ENCODE measurements at regions of chr2 and their contacts with region 1.

Region 1: DNA sequence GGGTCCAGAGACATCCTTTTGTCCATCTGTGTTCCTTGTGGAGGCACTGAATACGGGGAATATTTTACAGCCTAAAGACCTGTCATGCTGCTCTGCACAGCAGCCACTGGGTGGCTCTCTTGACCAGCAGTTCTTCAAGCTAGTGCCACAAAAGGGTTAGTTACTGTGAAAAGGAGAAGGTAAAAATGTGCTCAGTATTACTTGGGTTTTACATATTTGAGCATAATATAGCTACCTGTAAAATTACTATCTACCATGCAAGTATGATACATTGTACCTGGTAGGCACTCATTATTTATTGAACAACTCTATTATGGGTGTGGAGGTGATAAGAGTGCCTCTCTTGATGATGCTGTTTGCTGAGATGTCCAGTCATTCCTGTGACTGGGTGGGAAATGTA is 23.6 kb downstream of the FZD5 start:
- DNase-seq: peak; percentile 65
- H3K4me3 ChIP-seq: no peak overlapping the region
- H3K27ac ChIP-seq: no peak overlapping the region
- H3K4me1 ChIP-seq: no peaks in the 10 kb centered on the region
- H3K27me3 ChIP-seq: no peaks in the 10 kb centered on the region
- CTCF ChIP-seq: peak; percentile 83 to 87
- POLR2A ChIP-seq: no peak

Region 2: DNA sequence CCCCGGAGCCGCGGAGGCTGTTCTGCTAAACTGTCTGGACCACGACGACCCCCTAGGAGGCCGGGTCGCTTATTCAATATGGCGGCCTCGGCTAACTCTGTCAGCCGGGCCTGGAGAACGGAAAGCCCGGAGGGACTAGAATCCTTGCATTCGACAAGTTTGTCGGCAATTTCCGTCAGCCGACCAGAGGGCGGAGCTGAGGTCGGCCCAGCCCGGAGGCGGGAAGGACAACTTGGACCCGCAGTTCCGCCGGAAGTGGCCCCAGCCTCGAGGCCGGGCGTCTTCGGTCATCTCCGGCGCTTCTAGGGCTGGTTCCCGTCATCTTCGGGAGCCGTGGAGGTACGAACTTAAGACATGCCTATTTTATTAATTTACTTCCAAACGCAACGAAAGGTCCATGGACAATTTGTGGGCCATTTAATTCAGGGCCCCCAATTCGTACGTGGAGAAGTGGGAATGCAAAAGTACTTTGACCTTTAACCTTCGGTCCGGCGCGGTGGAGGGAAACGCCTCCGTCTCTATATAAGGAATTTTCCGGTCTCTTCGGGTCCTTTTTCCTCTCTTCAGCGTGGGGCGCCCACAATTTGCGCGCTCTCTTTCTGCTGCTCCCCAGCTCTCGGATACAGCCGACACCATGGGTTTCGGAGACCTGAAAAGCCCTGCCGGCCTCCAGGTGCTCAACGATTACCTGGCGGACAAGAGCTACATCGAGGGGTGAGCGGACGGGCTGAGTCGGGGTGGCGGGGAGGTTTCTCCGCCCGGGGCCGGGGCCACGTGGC is 1586.6 kb before region 1 on chr2 and contains the starts of genes EEF1B2 and NDUFS1:
- CTCF ChIA-PET with region 1: no interaction called
- POLR2A ChIA-PET with region 1: no interaction called
- dilution Hi-C with region 1: no loop called
- intact Hi-C with region 1: no loop called
- DNase-seq: peak; percentile 99
- H3K4me3 ChIP-seq: peak within 1 kb of the TSS; percentile 72 to 97 (median 96)
- H3K27ac ChIP-seq: peak within 1 kb of the TSS; percentile 67
- H3K4me1 ChIP-seq: peaks cover 27% of the 10 kb centered on the region
- H3K27me3 ChIP-seq: no peaks in the 10 kb centered on the region
- CTCF ChIP-seq: no peak
- POLR2A ChIP-seq: peak; percentile 89
- total RNA-seq, gene EEF1B2: 558 and 576 TPM in 2 replicates
- total RNA-seq, gene NDUFS1: 93.2 and 95.5 TPM in 2 replicates

Region 3: GRCh38 chr2:207762146-207762545 is 16.0 kb after region 1 on chr2:
- CTCF ChIA-PET with region 1: interaction called, 10 read pairs
- POLR2A ChIA-PET with region 1: no interaction called
- dilution Hi-C with region 1: no loop called
- intact Hi-C with region 1: no loop called
- DNase-seq: no peak
- H3K4me3 ChIP-seq: no peak overlapping the region
- H3K27ac ChIP-seq: no peak overlapping the region
- H3K4me1 ChIP-seq: no peaks in the 10 kb centered on the region
- H3K27me3 ChIP-seq: no peaks in the 10 kb centered on the region
- CTCF ChIP-seq: no peak
- POLR2A ChIP-seq: no peak

Region 4: GRCh38 chr2:207896525-207897295 is 150.6 kb after region 1 on chr2:
- CTCF ChIA-PET with region 1: no interaction called
- POLR2A ChIA-PET with region 1: no interaction called
- dilution Hi-C with region 1: no loop called
- intact Hi-C with region 1: no loop called
- DNase-seq: no peak
- H3K4me3 ChIP-seq: no peak overlapping the region
- H3K27ac ChIP-seq: no peak overlapping the region
- H3K4me1 ChIP-seq: peaks cover 13% of the 10 kb centered on the region
- H3K27me3 ChIP-seq: no peaks in the 10 kb centered on the region
- CTCF ChIP-seq: peak in 1 of 2 donors; percentile 8
- POLR2A ChIP-seq: no peak

Region 5: GRCh38 chr2:208033758-208034502 is 287.8 kb after region 1 on chr2:
- CTCF ChIA-PET with region 1: interaction called, 217 read pairs
- POLR2A ChIA-PET with region 1: no interaction called
- dilution Hi-C with region 1: no loop called
- intact Hi-C with region 1: loop called (anchors 1 kb)
- DNase-seq: peak; percentile 59
- H3K4me3 ChIP-seq: no peak overlapping the region
- H3K27ac ChIP-seq: no peak overlapping the region
- H3K4me1 ChIP-seq: no peaks in the 10 kb centered on the region
- H3K27me3 ChIP-seq: peaks cover 9 to 11% of the 10 kb centered on the region in 2 experiments
- CTCF ChIP-seq: peak; percentile 16 to 20
- POLR2A ChIP-seq: no peak

Region 6: DNA sequence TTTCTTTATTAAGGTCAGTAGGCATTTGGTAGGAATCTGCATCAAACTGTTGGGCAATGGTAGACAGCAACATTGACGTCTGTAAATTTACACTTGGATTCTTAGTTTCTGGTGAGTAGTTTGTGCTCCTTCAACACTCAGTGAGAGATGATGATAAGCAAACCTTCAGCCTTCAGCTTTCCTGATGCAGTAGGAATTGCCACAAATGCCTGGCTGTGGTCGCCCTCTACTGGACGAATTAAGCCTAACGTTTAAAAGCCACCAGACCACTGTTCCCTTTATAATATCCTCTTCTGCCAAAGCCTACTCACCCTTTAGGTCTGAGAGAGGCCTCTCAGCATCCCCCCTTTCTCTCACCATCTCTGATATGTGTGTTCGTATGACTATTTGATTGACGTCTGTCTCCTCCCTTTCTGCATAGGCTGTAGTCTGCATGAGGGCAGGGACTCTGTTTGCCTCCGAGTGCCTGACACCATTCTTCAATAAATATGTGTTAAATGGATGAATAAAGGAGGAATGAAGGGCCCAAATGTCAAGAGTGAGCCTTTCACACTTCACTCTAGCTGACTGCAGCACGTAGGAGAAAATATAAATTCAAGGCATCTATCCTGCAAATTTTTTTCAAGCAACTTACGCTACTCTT is 326.2 kb after region 1 on chr2:
- CTCF ChIA-PET with region 1: interaction called, 145 read pairs
- POLR2A ChIA-PET with region 1: no interaction called
- dilution Hi-C with region 1: no loop called
- intact Hi-C with region 1: loop called (anchors 1 kb)
- DNase-seq: peak; percentile 77
- H3K4me3 ChIP-seq: no peak overlapping the region
- H3K27ac ChIP-seq: no peak overlapping the region
- H3K4me1 ChIP-seq: no peaks in the 10 kb centered on the region
- H3K27me3 ChIP-seq: peaks cover 3 to 8% of the 10 kb centered on the region in 2 experiments
- CTCF ChIP-seq: peak; percentile 80 to 84
- POLR2A ChIP-seq: no peak

Measured in endothelial cell of umbilical vein (primary cell).